Activated naive CD4-positive, alpha-beta T cell treated with anti-CD3 and anti-CD28 coated beads for 36 hours (primary cell): ENCODE measurements at regions of chr1 and their contacts with region 1.

Region 1: DNA sequence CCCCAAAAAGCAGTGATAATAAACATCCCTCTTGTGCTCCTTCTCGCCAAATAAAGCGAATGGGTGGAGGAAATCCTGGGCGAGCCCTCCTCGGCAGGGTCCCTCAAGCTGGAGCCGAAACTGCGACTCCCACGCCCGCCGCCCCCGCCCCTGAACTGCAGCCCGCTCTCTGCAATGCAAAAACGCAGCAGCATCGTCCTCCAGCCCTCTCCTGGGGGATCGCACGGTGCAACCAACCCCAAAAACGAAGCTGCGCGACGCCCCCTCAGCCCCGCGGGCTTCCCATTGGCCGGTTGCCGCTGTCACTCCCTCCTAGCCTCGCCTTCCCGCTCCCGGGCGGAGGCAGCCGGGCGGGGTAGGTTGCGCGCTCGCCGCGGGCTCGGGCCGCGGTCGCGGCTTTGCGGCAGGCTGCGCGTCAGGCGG is at the start of gene TMCC2:
- DNase-seq: peak; percentile 89
- H3K4me3 Mint-ChIP-seq: peak within 1 kb of the TSS; percentile 96
- H3K27ac Mint-ChIP-seq: peak within 1 kb of the TSS; percentile 93
- H3K4me1 Mint-ChIP-seq: peaks cover 25% of the 10 kb centered on the region
- H3K27me3 Mint-ChIP-seq: peaks cover 16% of the 10 kb centered on the region
- total RNA-seq, gene TMCC2: 42.5 to 44.8 TPM

Region 2: DNA sequence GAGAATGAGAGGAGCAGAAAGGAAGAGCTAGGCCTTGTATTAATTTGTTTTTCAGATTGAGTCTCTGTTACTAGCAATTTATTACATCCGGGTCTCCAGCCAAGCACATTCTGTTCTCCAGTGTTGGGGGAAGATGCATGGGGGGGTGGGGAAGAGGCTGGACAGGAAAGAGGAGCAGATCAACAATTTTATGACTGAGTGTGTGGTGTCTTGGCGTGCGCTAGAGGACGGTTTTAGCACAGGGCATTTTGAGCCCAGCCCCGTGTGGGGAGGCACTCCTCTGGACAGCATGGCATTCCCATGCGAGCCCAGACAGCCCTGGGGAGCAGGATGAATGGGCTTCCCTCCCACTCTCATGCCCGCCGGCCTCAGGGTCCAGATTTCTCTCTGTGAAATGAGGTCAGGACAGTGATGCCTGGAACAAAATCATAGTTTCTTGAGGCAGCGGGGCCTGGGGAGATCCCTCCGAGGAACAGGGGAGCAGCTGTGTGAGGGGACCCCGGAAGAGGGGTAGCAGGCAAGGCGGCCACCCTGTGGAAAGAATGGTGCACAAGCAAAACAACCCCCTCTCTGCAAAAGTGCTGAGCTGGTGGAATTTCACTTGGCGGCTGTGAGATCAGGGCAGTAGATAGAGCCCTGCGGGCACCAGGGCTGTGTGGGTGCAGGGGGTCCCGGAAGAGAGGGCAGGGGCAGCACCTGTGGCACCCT is 1138.4 kb before region 1 on chr1:
- CTCF ChIA-PET with region 1: no interaction called
- intact Hi-C with region 1: no loop called
- DNase-seq: no peak
- H3K4me3 Mint-ChIP-seq: no peak overlapping the region
- H3K27ac Mint-ChIP-seq: no peak overlapping the region
- H3K4me1 Mint-ChIP-seq: no peaks in the 10 kb centered on the region
- H3K27me3 Mint-ChIP-seq: no peaks in the 10 kb centered on the region

Region 3: DNA sequence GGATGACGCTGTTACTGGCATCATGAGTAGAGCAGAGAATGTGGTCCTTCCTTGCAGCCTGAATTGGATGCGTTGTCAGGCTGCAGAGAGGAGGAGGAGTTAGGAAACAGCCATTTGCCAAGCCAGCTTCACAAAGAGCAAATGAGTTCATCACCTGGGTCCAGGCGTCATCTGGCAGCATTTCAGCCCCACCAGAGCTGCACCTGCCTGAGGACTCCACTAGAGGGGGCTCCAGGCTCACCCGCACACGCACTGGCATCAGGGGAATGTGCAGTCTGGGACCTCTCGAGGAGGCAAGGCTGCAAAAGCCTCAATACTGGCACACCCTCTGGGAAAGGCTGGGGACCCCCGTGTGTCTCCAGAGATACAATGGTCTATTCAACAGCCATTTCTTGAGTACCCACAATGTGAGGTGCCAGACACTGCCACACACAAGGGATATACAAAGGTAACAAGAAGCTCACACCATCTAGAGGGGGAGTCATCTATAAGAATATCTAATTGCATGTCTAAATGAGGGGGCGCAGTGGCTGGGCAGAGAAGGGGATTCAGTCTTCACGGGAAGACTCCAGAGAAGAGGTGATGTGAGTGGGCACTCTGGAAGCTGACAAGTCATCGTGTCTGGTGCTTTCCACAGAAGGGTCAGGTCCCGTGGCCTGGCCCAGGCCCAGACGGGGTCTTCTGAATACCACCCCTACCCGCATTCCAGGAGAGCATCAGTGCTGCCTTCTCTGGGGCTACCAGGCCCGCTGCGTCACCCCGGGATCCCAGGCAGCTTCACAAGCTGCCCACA is 238.1 kb before region 1 on chr1:
- CTCF ChIA-PET with region 1: interaction called, 4 read pairs
- intact Hi-C with region 1: loop called (anchors 1 kb)
- DNase-seq: peak; percentile 82
- H3K4me3 Mint-ChIP-seq: no peak overlapping the region
- H3K27ac Mint-ChIP-seq: no peak overlapping the region
- H3K4me1 Mint-ChIP-seq: peaks cover 12% of the 10 kb centered on the region
- H3K27me3 Mint-ChIP-seq: no peaks in the 10 kb centered on the region

Region 4: GRCh38 chr1:205199090-205199930 is 28.3 kb before region 1 on chr1:
- CTCF ChIA-PET with region 1: interaction called, 14 read pairs
- intact Hi-C with region 1: loop called (anchors 1 kb)
- DNase-seq: peak; percentile 74
- H3K4me3 Mint-ChIP-seq: peak overlapping the region; percentile 66
- H3K27ac Mint-ChIP-seq: peak overlapping the region; percentile 97
- H3K4me1 Mint-ChIP-seq: peaks cover 78% of the 10 kb centered on the region
- H3K27me3 Mint-ChIP-seq: no peaks in the 10 kb centered on the region

Region 5: DNA sequence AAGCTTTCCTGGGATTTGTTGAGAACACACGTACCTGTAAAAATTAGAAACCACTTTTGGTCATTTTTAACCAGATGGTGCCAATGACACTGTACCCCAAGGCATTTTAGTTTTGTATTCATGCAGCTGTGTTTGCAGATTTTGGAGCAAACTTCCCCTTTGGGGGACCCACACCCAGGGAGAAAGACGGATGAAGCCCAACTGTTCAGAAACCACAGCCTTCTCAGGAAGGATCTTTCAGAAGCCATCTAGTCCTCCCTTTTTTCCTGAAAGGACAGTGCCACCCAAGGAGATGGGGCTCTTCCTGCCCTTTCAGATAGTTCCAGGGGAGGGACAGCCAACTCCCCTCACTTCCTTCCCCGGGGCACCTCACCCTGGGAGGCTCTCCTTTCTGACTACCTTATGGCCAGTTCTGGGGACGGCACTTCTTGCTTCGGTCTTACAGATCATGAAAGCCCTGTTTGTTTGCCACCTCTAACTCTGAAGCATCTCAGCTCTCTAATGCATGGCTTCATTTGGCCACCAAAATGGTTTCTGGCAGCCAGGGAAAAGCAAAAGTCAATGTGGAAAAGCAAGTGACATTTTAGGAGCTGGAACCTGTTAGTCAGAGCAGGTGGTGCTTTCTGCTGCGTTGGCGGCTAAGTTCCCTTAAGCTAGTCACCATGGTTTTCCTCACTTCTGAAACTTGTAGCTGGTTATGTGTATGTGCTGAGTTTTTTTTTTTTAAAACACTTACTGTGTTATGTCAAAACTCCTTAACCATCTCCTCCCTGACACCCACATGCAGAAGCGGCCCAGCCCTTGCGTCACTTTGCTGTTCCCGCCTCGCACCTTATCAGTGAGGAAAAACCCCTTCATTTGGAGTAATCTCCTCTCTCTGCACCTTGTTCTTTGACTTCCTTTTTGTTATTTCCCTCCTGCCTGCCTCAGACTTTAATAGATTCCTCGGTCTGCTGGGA is 10.2 kb after region 1 on chr1:
- CTCF ChIA-PET with region 1: interaction called, 54 read pairs
- intact Hi-C with region 1: loop called (anchors 1 kb)
- DNase-seq: peak; percentile 92
- H3K4me3 Mint-ChIP-seq: peak overlapping the region; percentile 44
- H3K27ac Mint-ChIP-seq: peak overlapping the region; percentile 98
- H3K4me1 Mint-ChIP-seq: peaks cover 77% of the 10 kb centered on the region
- H3K27me3 Mint-ChIP-seq: no peaks in the 10 kb centered on the region

Region 6: GRCh38 chr1:205255941-205256780 is 28.6 kb after region 1 on chr1:
- CTCF ChIA-PET with region 1: interaction called, 277 read pairs
- intact Hi-C with region 1: loop called (anchors 1 kb)
- DNase-seq: peak; percentile 93
- H3K4me3 Mint-ChIP-seq: no peak overlapping the region
- H3K27ac Mint-ChIP-seq: peak overlapping the region; percentile 42
- H3K4me1 Mint-ChIP-seq: peaks cover 25% of the 10 kb centered on the region
- H3K27me3 Mint-ChIP-seq: no peaks in the 10 kb centered on the region

Region 7: DNA sequence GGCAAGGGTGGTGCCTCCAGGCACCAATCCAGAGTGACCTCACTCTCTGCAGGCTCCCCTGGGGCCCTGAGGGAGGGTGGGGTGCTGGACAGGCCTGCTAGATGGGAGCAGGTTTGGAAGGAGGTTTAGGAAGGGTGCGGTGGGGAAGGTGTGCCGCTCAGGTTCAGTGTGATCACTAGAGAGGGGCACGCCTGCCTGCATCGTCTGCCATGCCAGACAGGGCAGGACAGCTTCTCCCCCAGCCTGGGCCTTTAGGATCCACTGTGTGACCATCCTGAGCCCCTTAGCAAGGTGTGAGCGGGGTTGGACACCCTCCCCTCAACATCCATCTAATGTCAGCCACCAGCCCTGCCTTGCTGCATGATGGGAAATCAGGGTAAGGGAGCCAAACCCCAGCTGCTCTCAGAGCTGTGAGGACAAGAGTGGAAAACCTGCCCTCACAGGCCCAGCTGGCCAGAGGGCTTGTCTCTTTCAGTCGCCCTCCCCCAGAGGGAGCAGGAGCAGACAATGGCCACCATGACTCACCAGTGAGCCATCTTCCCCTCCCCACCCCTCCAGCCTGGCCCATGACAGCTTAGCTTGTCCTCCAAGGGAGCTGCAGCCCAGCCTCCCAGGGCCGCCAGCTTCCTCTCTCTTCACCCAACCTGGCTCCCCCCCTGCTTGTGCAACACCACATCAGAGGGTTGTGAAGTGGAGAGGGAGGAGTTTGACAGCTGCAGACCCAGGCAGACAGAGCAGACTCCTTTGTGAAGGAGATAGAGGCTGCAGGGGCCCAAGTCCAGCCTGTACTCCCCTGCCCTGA is 56.9 kb after region 1 on chr1:
- CTCF ChIA-PET with region 1: interaction called, 7 read pairs
- intact Hi-C with region 1: loop called (anchors 2 kb)
- DNase-seq: peak; percentile 97
- H3K4me3 Mint-ChIP-seq: peak overlapping the region; percentile 29
- H3K27ac Mint-ChIP-seq: peak overlapping the region; percentile 87
- H3K4me1 Mint-ChIP-seq: peaks cover 77% of the 10 kb centered on the region
- H3K27me3 Mint-ChIP-seq: no peaks in the 10 kb centered on the region

Region 8: DNA sequence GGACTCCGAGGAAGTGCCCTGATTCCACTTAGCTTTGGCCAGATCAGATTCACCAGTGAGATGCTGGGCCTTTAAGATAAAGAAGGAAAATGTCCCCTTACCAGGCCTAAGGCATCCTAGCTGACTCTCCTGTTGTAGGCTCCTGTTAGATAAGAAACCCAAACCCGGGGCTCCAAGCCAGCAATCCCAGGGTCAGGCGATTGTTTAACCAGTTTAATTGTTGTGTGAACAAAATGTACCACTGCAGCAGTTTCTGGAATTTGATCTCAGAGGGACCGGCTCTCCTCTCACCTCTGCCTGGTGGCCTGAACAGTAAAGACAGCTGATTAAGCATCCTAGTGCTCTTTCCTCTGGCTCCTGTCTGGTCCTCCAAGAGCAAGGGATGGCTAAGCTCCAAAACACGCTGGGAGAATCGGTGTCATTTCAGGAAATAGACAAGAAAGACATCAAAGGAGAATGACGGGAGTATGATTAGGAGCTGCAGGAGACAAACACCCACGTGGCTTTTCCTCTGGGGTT is 138.4 kb after region 1 on chr1:
- CTCF ChIA-PET with region 1: no interaction called
- intact Hi-C with region 1: no loop called
- DNase-seq: no peak
- H3K4me3 Mint-ChIP-seq: no peak overlapping the region
- H3K27ac Mint-ChIP-seq: no peak overlapping the region
- H3K4me1 Mint-ChIP-seq: no peaks in the 10 kb centered on the region
- H3K27me3 Mint-ChIP-seq: no peaks in the 10 kb centered on the region